Naive thymus-derived CD4-positive, alpha-beta T cell (primary cell): ENCODE measurements at regions of chr5 and their contacts with region 1.

Region 1: DNA sequence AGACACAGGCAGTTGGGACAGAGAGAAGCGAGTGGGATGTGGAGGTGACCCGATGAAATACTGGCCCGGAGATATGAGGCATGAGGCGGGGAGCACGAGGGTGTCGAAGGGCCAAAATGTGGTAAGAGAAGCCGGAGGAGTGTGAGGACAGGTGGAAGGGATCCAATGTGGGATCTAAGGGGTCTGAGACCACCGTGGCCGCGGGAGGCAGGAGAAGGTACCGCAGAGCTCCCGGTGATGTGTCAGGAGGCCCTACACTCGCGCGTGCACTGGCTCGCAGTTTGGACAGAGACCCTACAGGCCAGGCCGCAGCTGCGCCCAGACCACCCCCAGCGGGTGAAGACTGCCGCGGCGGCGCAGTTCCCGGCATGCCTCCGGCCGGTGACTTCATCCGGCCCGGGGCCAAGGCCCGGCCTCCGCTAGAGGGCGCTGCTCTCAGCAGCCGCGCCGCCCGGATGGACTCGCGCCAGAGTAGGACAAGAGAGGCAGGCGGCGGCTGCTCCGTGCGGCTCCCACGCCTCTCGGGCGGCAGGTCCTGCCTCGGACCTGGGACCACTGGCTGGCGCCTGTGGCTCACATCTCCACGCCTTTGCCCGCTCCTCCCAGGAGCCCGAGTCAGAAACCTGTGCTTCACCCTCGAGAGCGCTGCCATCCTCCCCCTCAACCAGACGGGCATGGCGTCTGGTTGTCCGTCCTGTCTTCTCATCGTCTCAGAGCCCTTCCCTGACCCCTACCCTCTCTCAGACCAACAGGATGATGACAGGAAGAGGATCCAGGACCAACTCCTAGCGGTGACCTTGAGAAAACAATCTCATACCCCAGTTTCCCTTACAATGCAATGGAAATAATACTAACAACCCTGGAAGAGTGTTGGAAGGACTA is 35.4 kb upstream of the STING1 start:
- DNase-seq: peak; percentile 78 to 97 (median 89)
- ATAC-seq: peak; percentile 97
- H3K4me3 ChIP-seq: peak overlapping the region; percentile 79
- H3K4me3 Mint-ChIP-seq: peak overlapping the region; percentile 88 to 93 (median 90)
- H3K27ac ChIP-seq: peak overlapping the region; percentile 90
- H3K27ac Mint-ChIP-seq: peak overlapping the region; percentile 93 to 99 (median 96)
- H3K4me1 ChIP-seq: peaks cover 0 to 3% of the 10 kb centered on the region in 2 donors
- H3K4me1 Mint-ChIP-seq: peaks cover 14 to 34% (median 26%) of the 10 kb centered on the region in 7 donors
- H3K27me3 ChIP-seq: no peaks in the 10 kb centered on the region
- H3K27me3 Mint-ChIP-seq: no peaks in the 10 kb centered on the region

Region 2: GRCh38 chr5:139287890-139288635 is 229.9 kb before region 1 on chr5:
- CTCF ChIA-PET with region 1: interaction called, 6 read pairs
- POLR2A ChIA-PET with region 1: no interaction called
- intact Hi-C with region 1: loop called (anchors 1 to 5 kb)
- DNase-seq: peak in 4 of 9 donors; percentile 21 to 38 (median 34)
- ATAC-seq: peak; percentile 57
- H3K4me3 ChIP-seq: no peak overlapping the region
- H3K4me3 Mint-ChIP-seq: no peak overlapping the region
- H3K27ac ChIP-seq: no peak overlapping the region
- H3K27ac Mint-ChIP-seq: peak overlapping the region in 2 of 9 donors; percentile 0 to 7
- H3K4me1 ChIP-seq: peaks cover 0 to 3% of the 10 kb centered on the region in 2 donors
- H3K4me1 Mint-ChIP-seq: peaks cover 0 to 20% (median 5%) of the 10 kb centered on the region in 7 donors
- H3K27me3 ChIP-seq: no peaks in the 10 kb centered on the region
- H3K27me3 Mint-ChIP-seq: no peaks in the 10 kb centered on the region

Region 3: DNA sequence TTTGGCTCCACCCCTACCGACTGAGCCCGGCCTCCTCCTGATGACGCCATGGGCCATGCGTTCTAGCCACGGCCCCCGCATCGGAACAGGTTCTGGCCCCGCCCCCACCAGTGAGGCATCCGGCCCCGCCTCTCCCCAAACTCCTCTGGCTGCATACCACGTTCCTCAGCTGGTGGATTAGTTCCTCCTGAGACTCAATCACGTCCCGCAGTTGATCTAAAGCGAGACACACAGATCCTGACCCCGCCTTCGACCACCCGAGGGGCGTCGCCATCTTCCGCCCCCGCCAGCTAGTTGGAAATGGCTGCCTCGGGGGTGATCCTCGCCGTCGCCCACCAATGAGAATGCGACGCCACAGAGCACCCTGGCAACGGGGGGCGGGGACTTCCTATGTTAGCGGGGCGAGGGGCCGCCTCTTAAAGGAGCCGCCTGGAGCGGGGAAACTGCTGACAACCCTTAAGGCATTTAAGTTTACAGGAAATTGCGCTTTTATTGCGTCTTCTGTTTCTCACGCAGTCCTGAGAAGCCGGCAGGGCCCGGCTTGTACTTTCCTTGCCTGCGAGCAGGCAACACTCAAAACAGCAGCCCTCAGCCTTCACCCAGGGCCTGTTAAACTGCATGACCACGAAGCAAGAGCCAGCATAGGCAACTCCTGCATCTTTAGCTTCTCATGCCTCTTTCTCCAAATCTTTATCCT is 114.0 kb before region 1 on chr5 and contains the start of gene SPATA24:
- CTCF ChIA-PET with region 1: interaction called, 3 read pairs
- POLR2A ChIA-PET with region 1: interaction called, 6 read pairs
- intact Hi-C with region 1: loop called in 1 of 2 experiments (anchors 1 kb)
- DNase-seq: peak; percentile 90 to 99 (median 98)
- ATAC-seq: peak; percentile 94
- H3K4me3 ChIP-seq: peak within 1 kb of the TSS; percentile 56
- H3K4me3 Mint-ChIP-seq: peak within 1 kb of the TSS; percentile 88 to 98 (median 94)
- H3K27ac ChIP-seq: peak within 1 kb of the TSS; percentile 88
- H3K27ac Mint-ChIP-seq: peak within 1 kb of the TSS; percentile 96 to 100 (median 99)
- H3K4me1 ChIP-seq: peaks cover 16 to 18% of the 10 kb centered on the region in 2 donors
- H3K4me1 Mint-ChIP-seq: peaks cover 26 to 42% (median 36%) of the 10 kb centered on the region in 7 donors
- H3K27me3 ChIP-seq: no peaks in the 10 kb centered on the region
- H3K27me3 Mint-ChIP-seq: no peaks in the 10 kb centered on the region
- total RNA-seq, gene SPATA24: 4.4 to 7.6 (median 5.8) TPM

Region 4: GRCh38 chr5:139439013-139439903 is 78.7 kb before region 1 on chr5 and contains the start of gene DNAJC18:
- CTCF ChIA-PET with region 1: interaction called, 60 read pairs
- POLR2A ChIA-PET with region 1: interaction called, 8 read pairs
- intact Hi-C with region 1: loop called (anchors 1 kb)
- DNase-seq: peak; percentile 71 to 90 (median 85)
- ATAC-seq: peak; percentile 96
- H3K4me3 ChIP-seq: peak within 1 kb of the TSS; percentile 86
- H3K4me3 Mint-ChIP-seq: peak within 1 kb of the TSS; percentile 84 to 99 (median 98)
- H3K27ac ChIP-seq: peak within 1 kb of the TSS; percentile 100
- H3K27ac Mint-ChIP-seq: peak within 1 kb of the TSS; percentile 96 to 100 (median 99)
- H3K4me1 ChIP-seq: peaks cover 15 to 26% of the 10 kb centered on the region in 2 donors
- H3K4me1 Mint-ChIP-seq: peaks cover 23 to 64% (median 45%) of the 10 kb centered on the region in 7 donors
- H3K27me3 ChIP-seq: no peaks in the 10 kb centered on the region
- H3K27me3 Mint-ChIP-seq: no peaks in the 10 kb centered on the region
- total RNA-seq, gene DNAJC18: 2.2 to 9.7 (median 4.9) TPM

Region 5: DNA sequence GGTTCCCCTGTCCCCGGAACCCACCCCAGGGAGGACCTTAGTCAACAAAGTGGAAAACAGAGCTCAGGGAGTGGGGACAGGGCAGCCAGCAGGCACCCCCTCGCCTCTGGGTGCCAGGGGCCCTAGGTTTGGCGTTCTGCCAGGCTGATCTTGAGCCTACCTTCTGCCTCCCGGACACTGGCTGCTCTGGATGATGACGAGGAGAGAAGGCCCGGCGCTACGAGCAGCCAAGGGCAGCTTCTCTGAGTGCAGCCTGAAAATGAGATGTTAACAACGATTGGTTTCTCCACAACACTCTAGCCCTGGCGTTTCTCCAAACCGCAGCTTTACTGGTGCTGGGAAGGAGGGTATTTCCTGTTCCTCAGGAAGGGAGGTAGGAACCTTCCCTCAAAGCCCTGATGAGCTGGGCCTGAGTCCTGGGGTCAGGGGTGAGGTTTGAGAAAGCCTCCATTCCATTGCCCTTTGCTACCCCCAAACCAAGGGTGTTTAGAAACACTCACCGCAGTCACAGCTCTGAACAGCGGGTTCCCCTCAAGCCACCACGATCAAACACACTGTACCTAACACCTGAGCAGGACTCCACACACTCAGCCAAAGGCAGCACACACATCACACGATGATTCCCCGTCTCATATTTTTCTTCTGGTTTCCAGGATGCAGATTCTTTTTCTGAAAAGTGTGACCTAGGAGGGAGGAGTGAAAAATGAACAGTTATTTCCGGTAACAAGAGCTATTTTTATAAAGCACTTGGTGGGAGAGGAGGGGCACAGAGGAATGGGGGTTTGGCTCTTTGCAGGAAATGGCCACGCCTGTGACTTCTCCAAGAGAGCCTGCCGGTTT is 35.7 kb before region 1 on chr5 and contains the start of gene STING1:
- CTCF ChIA-PET with region 1: interaction called, 26 read pairs
- POLR2A ChIA-PET with region 1: interaction called, 70 read pairs
- intact Hi-C with region 1: loop called (anchors 1 to 2 kb)
- DNase-seq: peak; percentile 29 to 83 (median 71)
- ATAC-seq: peak; percentile 86
- H3K4me3 ChIP-seq: peak within 1 kb of the TSS; percentile 87
- H3K4me3 Mint-ChIP-seq: peak within 1 kb of the TSS; percentile 86 to 99 (median 94)
- H3K27ac ChIP-seq: peak within 1 kb of the TSS; percentile 80
- H3K27ac Mint-ChIP-seq: peak within 1 kb of the TSS; percentile 94 to 99 (median 96)
- H3K4me1 ChIP-seq: peaks cover 21 to 29% of the 10 kb centered on the region in 2 donors
- H3K4me1 Mint-ChIP-seq: peaks cover 26 to 45% (median 39%) of the 10 kb centered on the region in 7 donors
- H3K27me3 ChIP-seq: no peaks in the 10 kb centered on the region
- H3K27me3 Mint-ChIP-seq: no peaks in the 10 kb centered on the region
- total RNA-seq, gene STING1: 124 to 213 (median 130) TPM

Region 6: GRCh38 chr5:139574641-139575312 is 56.9 kb after region 1 on chr5:
- CTCF ChIA-PET with region 1: interaction called, 3 read pairs
- POLR2A ChIA-PET with region 1: interaction called, 5 read pairs
- intact Hi-C with region 1: loop called in 1 of 2 experiments (anchors 1 kb)
- DNase-seq: peak in 7 of 9 donors; percentile 27 to 60 (median 47)
- ATAC-seq: peak; percentile 75
- H3K4me3 ChIP-seq: no peak overlapping the region
- H3K4me3 Mint-ChIP-seq: peak overlapping the region in 9 of 10 donors; percentile 11 to 80 (median 53)
- H3K27ac ChIP-seq: peak overlapping the region; percentile 57
- H3K27ac Mint-ChIP-seq: peak overlapping the region; percentile 62 to 96 (median 90)
- H3K4me1 ChIP-seq: peaks cover 61 to 68% of the 10 kb centered on the region in 2 donors
- H3K4me1 Mint-ChIP-seq: peaks cover 56 to 88% (median 74%) of the 10 kb centered on the region in 7 donors
- H3K27me3 ChIP-seq: no peaks in the 10 kb centered on the region
- H3K27me3 Mint-ChIP-seq: no peaks in the 10 kb centered on the region

Region 7: GRCh38 chr5:139765409-139766217 is 247.7 kb after region 1 on chr5:
- CTCF ChIA-PET with region 1: interaction called, 6 read pairs
- POLR2A ChIA-PET with region 1: no interaction called
- intact Hi-C with region 1: loop called (anchors 1 kb)
- DNase-seq: peak; percentile 62 to 93 (median 85)
- ATAC-seq: peak; percentile 95
- H3K4me3 ChIP-seq: peak overlapping the region; percentile 62
- H3K4me3 Mint-ChIP-seq: peak overlapping the region; percentile 37 to 84 (median 66)
- H3K27ac ChIP-seq: no peak overlapping the region
- H3K27ac Mint-ChIP-seq: peak overlapping the region in 2 of 9 donors; percentile 48 to 49
- H3K4me1 ChIP-seq: peaks cover 4 to 8% of the 10 kb centered on the region in 2 donors
- H3K4me1 Mint-ChIP-seq: peaks cover 0 to 12% (median 5%) of the 10 kb centered on the region in 7 donors
- H3K27me3 ChIP-seq: peaks cover 3 to 8% of the 10 kb centered on the region in 2 donors
- H3K27me3 Mint-ChIP-seq: peaks cover 22 to 53% (median 28%) of the 10 kb centered on the region in 5 donors